Activated T-helper 1 cell treated with anti-CD3 and anti-CD28 coated beads, Interleukin-12 subunit alpha, Interleukin-12 subunit beta, Interleukin-2, Interleukin-4 antibody, amounts not matched to agents 30 ng/mL and 10 ng/mL and 1 ng/mL, durations not matched to agents 14 hours and 24 hours and 36 hours (primary cell): ENCODE measurements at regions of chr1 and their contacts with region 1.

Region 1: GRCh38 chr1:48202030-48202752 is 20.3 kb upstream of the SLC5A9 start:
- DNase-seq: peak; percentile 9
- H3K4me3 Mint-ChIP-seq: no peak overlapping the region
- H3K27ac Mint-ChIP-seq: no peak overlapping the region
- H3K4me1 Mint-ChIP-seq: no peaks in the 10 kb centered on the region
- H3K27me3 Mint-ChIP-seq: peaks cover 6% of the 10 kb centered on the region

Region 2: GRCh38 chr1:47997289-47998200 is 204.6 kb before region 1 on chr1 and contains the start of gene TRABD2B:
- intact Hi-C with region 1: loop called (anchors 2 kb)
- DNase-seq: peak; percentile 49
- H3K4me3 Mint-ChIP-seq: peak within 1 kb of the TSS; percentile 62
- H3K27ac Mint-ChIP-seq: peak within 1 kb of the TSS; percentile 24
- H3K4me1 Mint-ChIP-seq: no peaks in the 10 kb centered on the region
- H3K27me3 Mint-ChIP-seq: peaks cover 44% of the 10 kb centered on the region
- total RNA-seq, gene TRABD2B: not detected in 2 replicates

Region 3: GRCh38 chr1:48093696-48094528 is 108.3 kb before region 1 on chr1:
- intact Hi-C with region 1: loop called (anchors 1 kb)
- DNase-seq: peak; percentile 54
- H3K4me3 Mint-ChIP-seq: no peak overlapping the region
- H3K27ac Mint-ChIP-seq: no peak overlapping the region
- H3K4me1 Mint-ChIP-seq: no peaks in the 10 kb centered on the region
- H3K27me3 Mint-ChIP-seq: peaks cover 27% of the 10 kb centered on the region

Region 4: DNA sequence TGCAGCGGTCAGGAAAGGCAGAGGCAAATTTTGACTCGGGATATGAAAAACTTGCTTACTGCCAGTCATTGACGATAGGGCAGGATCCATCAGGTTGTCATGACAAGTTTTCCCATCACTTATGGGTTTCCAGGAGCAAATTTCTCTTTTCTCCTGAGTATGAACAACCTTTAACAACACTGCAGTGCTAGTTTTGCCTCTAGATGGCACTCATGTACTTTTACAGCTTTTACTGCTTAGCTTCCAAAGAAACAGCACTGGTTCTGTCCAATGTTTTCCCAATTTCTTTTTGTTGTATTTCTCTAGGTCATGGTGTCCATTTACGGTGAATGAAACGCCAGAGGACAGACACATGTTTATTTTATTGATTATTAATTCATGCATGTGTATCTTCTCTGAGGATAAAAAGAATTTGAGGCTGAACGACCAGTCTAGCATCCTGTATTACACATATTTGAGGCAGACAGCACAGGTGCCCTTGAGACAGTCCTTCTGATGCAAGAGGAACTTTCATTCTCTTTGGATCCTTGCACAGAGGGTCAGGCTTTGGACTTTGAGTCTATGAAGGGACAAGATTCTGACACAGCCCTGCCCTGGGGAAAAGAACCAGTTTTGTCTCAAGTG is 92.7 kb before region 1 on chr1:
- intact Hi-C with region 1: loop called (anchors 1 kb)
- DNase-seq: no peak
- H3K4me3 Mint-ChIP-seq: no peak overlapping the region
- H3K27ac Mint-ChIP-seq: no peak overlapping the region
- H3K4me1 Mint-ChIP-seq: no peaks in the 10 kb centered on the region
- H3K27me3 Mint-ChIP-seq: peaks cover 3% of the 10 kb centered on the region

Region 5: GRCh38 chr1:48523558-48523957 is 321.4 kb after region 1 on chr1:
- intact Hi-C with region 1: no loop called
- DNase-seq: no peak
- H3K4me3 Mint-ChIP-seq: no peak overlapping the region
- H3K27ac Mint-ChIP-seq: no peak overlapping the region
- H3K4me1 Mint-ChIP-seq: no peaks in the 10 kb centered on the region
- H3K27me3 Mint-ChIP-seq: peaks cover 8% of the 10 kb centered on the region